ENCODE measurements at regions of chr5 and their contacts with region 1.

Region 1: DNA sequence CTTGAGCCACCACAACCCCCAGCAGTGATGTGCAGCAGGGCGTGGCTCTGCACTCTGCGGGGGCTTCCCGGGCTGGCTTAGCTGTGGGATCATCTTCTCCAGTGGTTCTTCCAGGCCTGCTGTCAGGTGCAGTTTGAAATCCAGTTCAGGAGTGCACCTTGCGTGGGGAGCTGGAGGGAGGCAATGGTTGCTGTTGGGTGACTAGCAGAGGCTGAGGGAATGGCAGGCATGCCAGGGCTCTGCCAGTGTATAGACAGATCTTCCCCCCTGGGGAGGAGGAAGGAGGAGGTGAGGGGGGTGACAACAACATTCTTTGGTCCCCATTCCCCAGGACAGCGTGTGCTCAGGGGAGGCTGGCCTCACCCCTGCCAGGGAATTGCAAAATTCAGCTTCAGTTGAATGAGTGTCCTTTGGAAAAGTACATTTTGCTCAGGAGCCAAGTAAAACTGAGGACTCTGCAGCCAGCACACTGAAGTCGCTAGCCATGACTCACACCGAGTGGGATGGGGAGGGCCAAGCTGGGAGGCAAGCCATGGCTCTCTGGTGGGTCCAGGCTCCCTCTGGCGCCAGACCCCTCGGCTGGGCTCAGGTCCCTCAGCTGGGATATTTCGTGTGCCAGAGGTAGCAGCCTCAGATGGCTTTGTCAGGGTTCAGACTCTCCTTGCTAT is 35.0 kb downstream of the ERGIC1 start:
- DNase-seq: peak; percentile 99
- H3K4me3 Mint-ChIP-seq: no peak overlapping the region
- H3K27ac Mint-ChIP-seq: no peak overlapping the region
- H3K4me1 Mint-ChIP-seq: peaks cover 15% of the 10 kb centered on the region
- H3K27me3 Mint-ChIP-seq: no peaks in the 10 kb centered on the region
- CTCF ChIP-seq: no peak

Region 2: GRCh38 chr5:172777881-172778814 is 90.9 kb before region 1 on chr5:
- CTCF ChIA-PET with region 1: interaction called, 11 read pairs
- POLR2A ChIA-PET with region 1: interaction called, 520 read pairs
- intact Hi-C with region 1: no loop called
- DNase-seq: peak; percentile 97
- H3K4me3 Mint-ChIP-seq: peak overlapping the region; percentile 69
- H3K27ac Mint-ChIP-seq: peak overlapping the region; percentile 99
- H3K4me1 Mint-ChIP-seq: peaks cover 70% of the 10 kb centered on the region
- H3K27me3 Mint-ChIP-seq: no peaks in the 10 kb centered on the region
- CTCF ChIP-seq: no peak

Region 3: GRCh38 chr5:172801184-172801671 is 67.8 kb before region 1 on chr5:
- CTCF ChIA-PET with region 1: interaction called, 15 read pairs
- POLR2A ChIA-PET with region 1: interaction called, 58 read pairs
- intact Hi-C with region 1: loop called (anchors 1 kb)
- DNase-seq: peak; percentile 94
- H3K4me3 Mint-ChIP-seq: peak overlapping the region; percentile 22
- H3K27ac Mint-ChIP-seq: peak overlapping the region; percentile 89
- H3K4me1 Mint-ChIP-seq: peaks cover 53% of the 10 kb centered on the region
- H3K27me3 Mint-ChIP-seq: no peaks in the 10 kb centered on the region
- CTCF ChIP-seq: no peak

Region 4: DNA sequence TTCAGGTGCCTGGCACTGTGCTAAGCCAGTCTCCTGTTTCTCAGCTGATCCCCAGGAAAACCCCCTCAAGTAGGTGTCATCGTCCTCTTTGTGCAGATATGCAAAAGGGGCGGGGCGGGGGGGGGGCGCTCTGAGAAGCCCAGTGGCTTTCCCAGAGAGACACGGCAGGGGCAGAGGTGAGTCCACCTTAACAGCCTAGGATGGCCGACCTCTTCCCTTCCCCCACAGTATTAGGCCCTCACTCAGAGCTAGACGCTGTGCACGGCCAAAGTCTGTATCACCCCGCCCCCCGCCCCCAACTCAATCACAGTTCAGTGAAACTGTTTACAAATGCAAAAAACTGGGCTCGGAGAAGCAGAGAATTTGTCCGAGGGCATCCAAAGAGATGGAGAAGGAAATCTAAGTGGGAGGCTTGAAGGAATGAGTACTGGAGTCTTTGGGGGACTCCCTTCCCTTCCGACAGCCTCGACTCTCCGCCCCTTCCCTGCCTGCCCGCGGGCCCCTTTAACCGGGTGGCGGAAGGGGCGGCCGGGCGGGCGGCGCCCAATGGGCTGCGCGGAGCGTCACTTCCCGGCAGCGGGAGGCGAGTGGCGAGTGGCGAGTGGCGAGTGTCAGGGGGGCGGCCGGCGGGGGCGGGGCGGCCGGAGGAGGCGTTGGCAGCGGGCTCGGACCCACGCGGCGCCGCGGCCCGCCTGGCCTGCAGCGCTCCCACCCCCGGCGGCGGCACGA is 35.2 kb before region 1 on chr5 and contains the start of gene ERGIC1:
- CTCF ChIA-PET with region 1: interaction called, 4 read pairs
- POLR2A ChIA-PET with region 1: interaction called, 10 read pairs
- intact Hi-C with region 1: loop called (anchors 2 kb)
- DNase-seq: peak; percentile 91
- H3K4me3 Mint-ChIP-seq: peak within 1 kb of the TSS; percentile 87
- H3K27ac Mint-ChIP-seq: peak within 1 kb of the TSS; percentile 88
- H3K4me1 Mint-ChIP-seq: peaks cover 40% of the 10 kb centered on the region
- H3K27me3 Mint-ChIP-seq: no peaks in the 10 kb centered on the region
- CTCF ChIP-seq: peak; percentile 26
- total RNA-seq, gene ERGIC1: 257 and 292 TPM in 2 replicates

Region 5: DNA sequence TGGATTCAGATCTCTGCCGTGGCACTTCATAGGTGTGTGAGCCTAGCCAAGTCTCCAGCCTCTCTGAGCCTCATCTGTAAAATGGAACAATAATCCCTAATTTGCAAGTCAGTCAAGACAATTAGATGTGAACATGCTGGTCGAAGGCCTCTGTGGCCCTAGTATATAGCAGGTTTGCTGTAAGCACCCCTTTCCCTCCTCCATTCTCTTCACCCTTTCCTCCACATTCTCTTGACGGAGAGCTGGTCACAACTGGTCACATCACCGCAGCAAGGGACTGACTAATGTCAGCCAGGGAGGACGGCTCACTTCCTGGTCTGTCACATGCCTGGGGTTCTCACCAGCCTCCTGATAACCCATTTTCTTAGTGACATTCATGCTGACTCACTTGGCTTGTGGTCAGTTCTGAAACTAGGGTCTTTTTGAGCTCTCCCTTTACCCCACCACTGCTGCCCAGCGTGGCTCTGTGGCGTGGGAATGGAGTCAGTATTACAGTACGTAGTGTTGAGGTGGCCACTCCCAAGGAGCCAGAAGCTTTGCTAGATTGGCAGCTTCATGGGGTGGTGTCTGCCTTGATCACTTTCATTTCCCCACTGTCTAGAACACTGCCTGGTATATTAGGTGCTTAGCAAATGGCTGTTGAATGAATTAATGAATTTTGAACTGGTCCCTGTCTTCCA is 12.8 kb after region 1 on chr5:
- CTCF ChIA-PET with region 1: interaction called, 15 read pairs
- POLR2A ChIA-PET with region 1: interaction called, 83 read pairs
- intact Hi-C with region 1: loop called (anchors 2 kb)
- DNase-seq: no peak
- H3K4me3 Mint-ChIP-seq: no peak overlapping the region
- H3K27ac Mint-ChIP-seq: peak overlapping the region; percentile 79
- H3K4me1 Mint-ChIP-seq: peaks cover 48% of the 10 kb centered on the region
- H3K27me3 Mint-ChIP-seq: no peaks in the 10 kb centered on the region
- CTCF ChIP-seq: no peak

Region 6: GRCh38 chr5:172910828-172911627 is 42.0 kb after region 1 on chr5:
- CTCF ChIA-PET with region 1: interaction called, 26 read pairs
- POLR2A ChIA-PET with region 1: interaction called, 343 read pairs
- intact Hi-C with region 1: loop called (anchors 1 kb)
- DNase-seq: peak; percentile 99
- H3K4me3 Mint-ChIP-seq: no peak overlapping the region
- H3K27ac Mint-ChIP-seq: peak overlapping the region; percentile 90
- H3K4me1 Mint-ChIP-seq: peaks cover 43% of the 10 kb centered on the region
- H3K27me3 Mint-ChIP-seq: no peaks in the 10 kb centered on the region
- CTCF ChIP-seq: peak; percentile 50

Region 7: DNA sequence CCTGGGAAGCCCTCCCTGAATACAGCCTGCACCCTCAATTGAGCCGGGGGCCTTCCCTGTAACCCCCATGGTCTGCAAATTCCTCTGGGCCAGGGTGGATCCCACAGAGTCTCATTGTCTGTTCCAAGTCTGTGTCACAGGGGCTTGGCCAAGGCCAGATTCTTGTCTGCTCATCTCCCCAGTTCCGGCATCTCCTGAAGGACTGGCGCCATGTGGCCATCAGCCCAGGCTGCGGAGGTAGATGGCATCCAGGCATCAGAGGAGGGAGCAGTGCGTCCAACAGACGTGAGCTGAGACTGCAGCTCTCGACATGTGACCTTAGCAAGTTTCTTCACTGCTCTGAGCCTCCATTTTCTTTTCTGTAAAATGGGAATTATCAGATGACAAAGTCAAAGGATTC is 52.8 kb after region 1 on chr5:
- CTCF ChIA-PET with region 1: no interaction called
- POLR2A ChIA-PET with region 1: no interaction called
- intact Hi-C with region 1: no loop called
- DNase-seq: no peak
- H3K4me3 Mint-ChIP-seq: no peak overlapping the region
- H3K27ac Mint-ChIP-seq: peak overlapping the region; percentile 74
- H3K4me1 Mint-ChIP-seq: peaks cover 25% of the 10 kb centered on the region
- H3K27me3 Mint-ChIP-seq: no peaks in the 10 kb centered on the region
- CTCF ChIP-seq: no peak

Region 8: DNA sequence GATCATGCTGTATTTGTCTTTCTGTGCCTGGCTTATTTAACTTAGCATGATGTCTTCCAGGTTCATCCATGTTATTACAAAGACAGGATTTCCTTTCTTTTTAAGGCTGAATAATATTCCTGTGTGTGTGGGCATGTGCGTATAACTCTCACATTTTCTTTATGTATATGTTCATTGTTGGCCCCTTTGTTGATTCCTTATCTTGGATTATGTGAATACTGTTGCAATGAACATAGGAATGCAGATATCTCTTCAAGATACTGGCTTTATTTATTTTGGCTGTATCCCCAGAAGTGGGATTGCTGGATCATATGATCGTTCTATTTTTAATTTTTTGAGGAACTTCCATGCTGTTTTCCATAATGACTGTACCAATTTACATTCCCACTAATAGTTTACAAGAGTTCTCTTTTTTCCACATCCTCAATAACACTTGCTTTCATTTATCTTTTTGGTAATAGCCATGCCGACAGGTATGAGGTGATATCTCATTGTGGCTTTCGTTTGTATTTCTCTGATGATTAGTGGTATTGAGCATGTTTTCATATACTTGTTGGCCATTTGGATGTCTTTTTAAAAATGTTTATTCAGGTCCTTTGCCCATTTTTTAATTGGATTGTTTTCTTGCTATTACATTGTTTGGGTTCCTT is 225.1 kb after region 1 on chr5:
- CTCF ChIA-PET with region 1: no interaction called
- POLR2A ChIA-PET with region 1: no interaction called
- intact Hi-C with region 1: no loop called
- DNase-seq: peak; percentile 32
- H3K4me3 Mint-ChIP-seq: no peak overlapping the region
- H3K27ac Mint-ChIP-seq: no peak overlapping the region
- H3K4me1 Mint-ChIP-seq: peaks cover 23% of the 10 kb centered on the region
- H3K27me3 Mint-ChIP-seq: no peaks in the 10 kb centered on the region
- CTCF ChIP-seq: no peak

Measured in MCF 10A (cell line).